ENCODE measurements at regions of chr17 and their contacts with region 1.

Region 1: DNA sequence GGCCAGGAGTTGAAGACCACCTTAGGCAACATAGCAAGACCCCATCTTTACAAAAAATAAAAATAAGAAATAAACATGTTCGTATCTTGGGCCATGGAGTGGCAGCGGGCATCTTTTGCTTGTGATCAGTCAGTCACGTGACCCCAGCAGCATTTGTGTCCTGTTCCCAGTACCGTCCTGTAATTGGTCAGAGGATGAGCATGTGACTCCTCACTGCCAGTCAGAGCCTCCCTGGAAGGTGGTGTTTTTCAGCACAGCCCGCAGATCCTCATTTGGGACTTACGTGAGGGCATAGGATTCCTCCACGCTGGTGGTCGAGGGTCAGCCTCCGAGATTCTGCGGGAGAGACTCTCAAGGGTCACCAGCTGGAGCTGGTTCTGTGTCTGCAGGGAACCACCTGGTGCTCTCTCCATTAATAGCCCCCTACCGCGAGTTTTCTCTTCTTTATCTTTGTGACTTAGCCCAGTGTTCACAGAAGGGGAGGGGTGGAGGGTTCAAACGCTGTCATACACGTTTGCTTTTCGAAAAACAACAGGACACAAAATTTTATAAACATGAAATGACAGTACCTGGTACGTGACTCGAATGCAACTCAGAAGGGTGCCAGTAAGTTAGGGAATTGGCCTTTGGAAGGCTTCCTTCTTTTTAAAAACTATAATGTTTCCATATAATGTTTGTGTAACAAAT is 17.2 kb downstream of the MRC2 start:
- DNase-seq: no peak
- ATAC-seq: no peak
- H3K4me3 ChIP-seq: no peak overlapping the region
- H3K27ac ChIP-seq: no peak overlapping the region
- H3K4me1 ChIP-seq: peaks cover 0 to 22% (median 13%) of the 10 kb centered on the region in 12 donors
- H3K27me3 ChIP-seq: no peaks in the 10 kb centered on the region
- CTCF ChIP-seq: no peak
- POLR2A ChIP-seq: no peak

Region 2: GRCh38 chr17:62581764-62582163 is 62.9 kb before region 1 on chr17:
- intact Hi-C with region 1: loop called in 1 of 10 experiments (anchors 10 kb)
- DNase-seq: no peak
- ATAC-seq: peak in 1 of 4 donors; percentile 24
- H3K4me3 ChIP-seq: no peak overlapping the region
- H3K27ac ChIP-seq: no peak overlapping the region
- H3K4me1 ChIP-seq: peaks cover 0 to 4% (median 0%) of the 10 kb centered on the region in 12 donors
- H3K27me3 ChIP-seq: no peaks in the 10 kb centered on the region
- CTCF ChIP-seq: no peak
- POLR2A ChIP-seq: no peak